Natural killer cell (primary cell): ENCODE measurements at regions of chr20 and their contacts with region 1.

Region 1: DNA sequence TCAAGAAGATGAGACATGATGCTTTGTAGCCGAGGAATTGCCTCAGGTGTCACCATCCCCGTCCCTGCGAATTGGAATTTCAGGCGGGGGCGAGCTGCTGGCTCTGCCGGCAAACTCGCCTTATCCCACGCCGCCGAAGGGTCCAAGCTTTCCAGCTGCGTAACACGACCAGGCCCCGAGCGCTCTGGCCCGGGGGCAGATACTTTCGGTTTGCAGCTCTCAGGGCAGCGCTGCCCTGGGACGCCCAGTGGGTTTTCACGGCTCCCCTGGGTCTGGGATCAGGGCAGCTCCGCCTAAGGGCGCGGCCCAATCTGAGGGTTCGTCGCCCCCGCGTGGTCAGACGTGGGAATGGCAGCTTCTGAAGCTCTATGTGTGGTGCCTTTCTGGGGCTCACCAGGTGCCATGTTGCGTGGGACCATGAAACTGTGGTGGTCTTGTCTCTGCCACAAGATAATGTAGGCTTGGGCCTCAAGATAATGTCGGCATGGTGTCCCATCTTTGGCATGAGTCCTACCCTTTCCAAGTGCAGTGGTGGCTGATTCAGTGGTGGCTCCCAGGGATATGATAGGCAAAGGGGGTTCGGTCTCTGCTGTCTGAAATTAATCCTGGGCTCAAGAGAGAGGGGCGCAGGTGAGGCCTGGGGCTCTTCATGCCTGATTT is 20.9 kb downstream of the PIGT start:
- DNase-seq: peak; percentile 86 to 93
- ATAC-seq: peak; percentile 91 to 93 (median 93)
- H3K4me3 ChIP-seq: peak overlapping the region; percentile 65
- H3K4me3 Mint-ChIP-seq: peak overlapping the region; percentile 73
- H3K27ac ChIP-seq: peak overlapping the region; percentile 68
- H3K27ac Mint-ChIP-seq: peak overlapping the region in 1 of 2 donors; percentile 74
- H3K4me1 ChIP-seq: peaks cover 25% of the 10 kb centered on the region
- H3K4me1 Mint-ChIP-seq: peaks cover 10 to 25% of the 10 kb centered on the region in 2 donors
- H3K27me3 ChIP-seq: no peaks in the 10 kb centered on the region
- H3K27me3 Mint-ChIP-seq: no peaks in the 10 kb centered on the region
- CTCF ChIP-seq: peak; percentile 95

Region 2: GRCh38 chr20:45318948-45319347 is 117.9 kb before region 1 on chr20:
- intact Hi-C with region 1: loop called (anchors 1 kb)
- DNase-seq: no peak
- ATAC-seq: no peak
- H3K4me3 ChIP-seq: no peak overlapping the region
- H3K4me3 Mint-ChIP-seq: no peak overlapping the region
- H3K27ac ChIP-seq: no peak overlapping the region
- H3K27ac Mint-ChIP-seq: no peak overlapping the region
- H3K4me1 ChIP-seq: peaks cover 23% of the 10 kb centered on the region
- H3K4me1 Mint-ChIP-seq: peaks cover 0 to 6% of the 10 kb centered on the region in 2 donors
- H3K27me3 ChIP-seq: no peaks in the 10 kb centered on the region
- H3K27me3 Mint-ChIP-seq: peaks cover 29 to 33% of the 10 kb centered on the region in 2 donors
- CTCF ChIP-seq: no peak

Region 3: GRCh38 chr20:45373353-45374100 is 63.3 kb before region 1 on chr20:
- intact Hi-C with region 1: loop called (anchors 1 kb)
- DNase-seq: peak; percentile 80 to 95
- ATAC-seq: peak; percentile 84 to 88 (median 84)
- H3K4me3 ChIP-seq: peak overlapping the region; percentile 51
- H3K4me3 Mint-ChIP-seq: peak overlapping the region; percentile 85
- H3K27ac ChIP-seq: peak overlapping the region; percentile 81
- H3K27ac Mint-ChIP-seq: peak overlapping the region; percentile 84 to 93
- H3K4me1 ChIP-seq: peaks cover 26% of the 10 kb centered on the region
- H3K4me1 Mint-ChIP-seq: peaks cover 15 to 25% of the 10 kb centered on the region in 2 donors
- H3K27me3 ChIP-seq: no peaks in the 10 kb centered on the region
- H3K27me3 Mint-ChIP-seq: no peaks in the 10 kb centered on the region
- CTCF ChIP-seq: peak; percentile 85

Region 4: GRCh38 chr20:45415774-45416637 is 20.9 kb before region 1 on chr20 and contains the start of gene PIGT:
- intact Hi-C with region 1: loop called (anchors 2 kb)
- DNase-seq: peak; percentile 86 to 97
- ATAC-seq: peak; percentile 94 to 98 (median 95)
- H3K4me3 ChIP-seq: peak within 1 kb of the TSS; percentile 78
- H3K4me3 Mint-ChIP-seq: peak within 1 kb of the TSS; percentile 93
- H3K27ac ChIP-seq: peak within 1 kb of the TSS; percentile 88
- H3K27ac Mint-ChIP-seq: peak within 1 kb of the TSS; percentile 93 to 95
- H3K4me1 ChIP-seq: peaks cover 22% of the 10 kb centered on the region
- H3K4me1 Mint-ChIP-seq: peaks cover 36 to 43% of the 10 kb centered on the region in 2 donors
- H3K27me3 ChIP-seq: no peaks in the 10 kb centered on the region
- H3K27me3 Mint-ChIP-seq: no peaks in the 10 kb centered on the region
- CTCF ChIP-seq: no peak
- total RNA-seq, gene PIGT: 173 to 190 (median 187) TPM